ENCODE measurements at regions of chr16 and their contacts with region 1.

Region 1: GRCh38 chr16:67246934-67247697 is at the start of gene FHOD1:
- DNase-seq: peak; percentile 94 to 99
- H3K4me3 ChIP-seq: peak within 1 kb of the TSS; percentile 69 to 71
- H3K27ac ChIP-seq: peak within 1 kb of the TSS; percentile 82 to 89
- H3K4me1 ChIP-seq: peaks cover 28 to 31% of the 10 kb centered on the region in 2 donors
- H3K27me3 ChIP-seq: peaks cover 6% of the 10 kb centered on the region
- CTCF ChIP-seq: no peak
- total RNA-seq, gene FHOD1: 20.2 TPM

Region 2: GRCh38 chr16:67226804-67227557 is 20.1 kb before region 1 on chr16 and contains the start of gene TMEM208:
- intact Hi-C with region 1: loop called (anchors 1 kb)
- DNase-seq: peak; percentile 95 to 99
- H3K4me3 ChIP-seq: peak within 1 kb of the TSS; percentile 87 to 96
- H3K27ac ChIP-seq: peak within 1 kb of the TSS; percentile 80 to 88
- H3K4me1 ChIP-seq: peaks cover 6 to 15% of the 10 kb centered on the region in 2 donors
- H3K27me3 ChIP-seq: no peaks in the 10 kb centered on the region
- CTCF ChIP-seq: peak in 1 of 3 experiments; percentile 23
- total RNA-seq, gene TMEM208: 8.3 TPM

Region 3: DNA sequence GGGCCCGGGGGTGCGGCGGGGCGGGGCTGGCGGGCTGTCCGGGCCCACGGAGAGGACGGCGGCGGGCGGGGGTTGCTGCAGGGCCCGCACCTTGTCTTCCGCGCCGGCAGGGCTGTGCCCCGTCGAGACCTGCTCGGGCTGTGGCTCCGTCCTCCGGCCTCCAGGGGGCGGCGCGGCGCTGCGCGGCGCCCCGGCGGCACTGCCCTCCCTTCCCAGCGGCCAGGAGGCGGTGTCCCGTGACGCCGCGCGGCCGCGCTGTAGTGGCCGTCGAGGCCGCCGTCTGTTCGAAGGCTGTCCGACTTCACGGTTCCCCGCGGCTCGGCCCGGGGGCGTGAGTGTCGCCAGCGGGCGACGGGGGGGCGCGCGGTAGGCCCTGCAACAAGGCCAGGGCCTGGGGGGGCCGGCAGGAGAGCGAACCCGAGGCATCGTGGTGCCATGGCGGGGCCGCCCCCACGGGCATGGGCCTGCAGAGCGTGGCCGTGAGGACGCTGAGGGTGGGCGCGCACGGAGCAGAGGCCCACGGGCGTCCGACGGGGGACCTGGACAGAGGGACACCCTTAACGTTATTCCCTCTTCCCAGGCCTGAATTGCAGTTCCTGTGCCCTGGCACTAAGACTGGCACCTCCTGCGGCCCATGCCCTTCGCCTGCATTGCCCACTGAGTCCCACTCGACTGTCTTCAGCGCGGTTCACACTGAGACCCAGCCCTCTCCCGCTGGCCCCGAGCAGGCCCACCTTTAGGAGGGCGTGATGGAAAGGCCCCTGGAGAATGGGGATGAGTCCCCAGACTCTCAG is 32.4 kb after region 1 on chr16 and contains the start of gene PLEKHG4:
- intact Hi-C with region 1: no loop called
- DNase-seq: peak; percentile 29 to 78
- H3K4me3 ChIP-seq: peak within 1 kb of the TSS; percentile 54 to 67
- H3K27ac ChIP-seq: peak within 1 kb of the TSS; percentile 79 to 82
- H3K4me1 ChIP-seq: peaks cover 3 to 15% of the 10 kb centered on the region in 2 donors
- H3K27me3 ChIP-seq: no peaks in the 10 kb centered on the region
- CTCF ChIP-seq: peak; percentile 25 to 84 (median 47)
- total RNA-seq, gene PLEKHG4: 3.7 TPM

Region 4: DNA sequence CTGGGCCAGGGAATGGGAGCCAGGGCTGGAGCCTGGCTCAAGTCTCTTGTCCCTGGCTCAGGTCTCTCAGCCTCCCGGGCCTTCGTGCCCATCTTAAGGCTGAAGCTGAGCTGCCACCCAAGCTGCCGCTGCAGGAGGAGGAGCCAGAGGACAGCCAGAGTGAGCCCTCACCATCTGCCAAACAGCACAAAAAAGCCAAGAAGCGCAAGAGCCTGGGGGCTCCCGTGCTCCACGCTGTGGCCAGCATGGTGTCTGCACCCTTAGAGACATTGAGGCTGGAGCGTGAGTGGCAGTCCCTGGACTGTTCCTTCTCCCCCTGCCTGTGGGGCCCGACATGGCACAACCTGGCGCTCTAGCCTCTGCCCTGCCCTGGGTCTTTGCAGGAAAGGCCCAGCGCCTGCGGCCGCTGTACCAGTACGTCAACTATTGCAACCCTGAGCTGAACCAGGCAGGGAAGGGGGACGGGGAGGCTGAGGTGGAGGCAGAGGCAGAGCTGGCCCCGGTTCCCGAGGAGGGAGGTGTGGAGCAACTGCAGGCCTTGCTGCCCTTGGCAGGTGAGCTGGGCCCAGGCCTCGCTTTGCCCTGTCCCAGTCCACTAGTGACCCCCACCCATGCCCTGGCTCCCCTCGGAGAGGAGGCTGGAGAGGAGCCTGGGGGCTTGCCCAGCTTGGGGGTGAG is 420.8 kb after region 1 on chr16:
- intact Hi-C with region 1: loop called (anchors 10 kb)
- DNase-seq: peak; percentile 66 to 95
- H3K4me3 ChIP-seq: peak overlapping the region; percentile 88 to 97
- H3K27ac ChIP-seq: peak overlapping the region; percentile 91
- H3K4me1 ChIP-seq: peaks cover 9 to 20% of the 10 kb centered on the region in 2 donors
- H3K27me3 ChIP-seq: no peaks in the 10 kb centered on the region
- CTCF ChIP-seq: peak; percentile 90 to 92 (median 92)

Measured in ascending aorta (tissue), 2 donors.